Mammary epithelial cell (primary cell): ENCODE measurements at regions of chr10 and their contacts with region 1.

Region 1: DNA sequence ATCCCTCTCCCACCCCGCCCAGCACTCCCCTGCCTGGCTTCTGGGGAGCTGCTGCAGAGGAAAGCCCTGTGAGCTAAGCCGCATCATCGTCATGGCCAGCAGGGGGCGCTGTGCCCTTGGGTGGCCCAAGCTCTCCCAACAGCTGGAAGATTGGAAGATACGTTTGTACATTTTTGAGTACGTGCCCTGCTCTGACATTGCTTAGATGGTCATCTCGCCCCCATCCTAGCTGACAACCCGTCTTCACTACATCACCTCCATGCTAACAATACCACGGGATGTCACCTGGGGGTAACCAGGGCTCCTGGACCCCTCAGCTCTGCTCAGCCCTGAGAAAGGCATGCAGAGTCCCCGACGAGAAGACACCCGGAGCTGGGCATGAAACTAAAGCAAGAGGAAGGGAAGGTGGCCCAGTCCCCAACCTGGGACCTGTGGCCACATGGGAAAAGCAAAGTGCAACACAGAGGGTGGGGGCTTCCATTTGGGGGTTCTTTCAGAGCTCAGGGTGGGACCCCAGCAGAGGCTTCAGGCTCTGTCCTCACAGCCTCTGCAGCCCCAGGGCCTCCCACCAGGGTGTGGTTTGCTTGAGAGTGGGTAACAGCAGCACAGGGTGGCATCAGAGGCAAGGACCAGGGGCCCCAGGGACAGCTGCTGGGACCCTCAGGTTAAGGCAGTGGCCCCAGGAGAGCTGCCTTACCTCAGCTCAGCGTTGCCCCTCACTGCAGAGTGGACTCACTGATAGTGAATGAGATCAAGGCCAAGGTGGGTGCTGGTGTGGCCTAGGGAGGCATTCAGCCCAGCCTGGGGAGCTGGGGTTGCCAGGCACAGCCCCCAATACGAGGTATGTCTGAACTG is 136.7 kb downstream of the PTPN20 start:
- DNase-seq: peak; percentile 46
- H3K4me3 ChIP-seq: no peak overlapping the region
- H3K27ac ChIP-seq: no peak overlapping the region
- H3K4me1 ChIP-seq: no peaks in the 10 kb centered on the region
- H3K27me3 ChIP-seq: no peaks in the 10 kb centered on the region
- CTCF ChIP-seq: peak; percentile 82 to 92

Region 2: GRCh38 chr10:47104786-47105385 is 57.0 kb after region 1 on chr10:
- CTCF ChIA-PET with region 1: no interaction called
- dilution Hi-C with region 1: loop called (anchors 5 kb)
- in situ Hi-C with region 1: no loop called
- intact Hi-C with region 1: no loop called
- DNase-seq: no peak
- H3K4me3 ChIP-seq: no peak overlapping the region
- H3K27ac ChIP-seq: no peak overlapping the region
- H3K4me1 ChIP-seq: no peaks in the 10 kb centered on the region
- H3K27me3 ChIP-seq: peaks cover 6% of the 10 kb centered on the region
- CTCF ChIP-seq: no peak

Region 3: DNA sequence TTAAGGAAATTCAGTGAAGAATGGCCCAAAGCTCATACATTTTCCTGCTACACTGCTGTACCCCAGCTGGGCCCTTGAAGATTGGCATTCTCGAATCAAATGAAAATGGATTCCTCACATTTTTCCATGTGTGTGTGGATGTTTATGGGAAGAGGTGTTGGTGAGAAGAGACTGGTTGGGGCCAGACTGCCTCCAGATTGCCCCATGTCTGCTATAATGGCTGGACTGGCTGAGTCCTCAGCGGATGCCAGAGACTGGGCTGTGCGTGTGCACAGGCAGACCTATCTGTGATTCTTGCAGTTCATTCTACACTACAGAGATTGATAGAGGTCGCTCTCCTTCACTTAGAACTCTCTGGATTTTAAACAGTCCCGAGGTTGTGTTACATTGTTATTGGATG is 68.5 kb after region 1 on chr10:
- CTCF ChIA-PET with region 1: no interaction called
- dilution Hi-C with region 1: no loop called
- in situ Hi-C with region 1: no loop called
- intact Hi-C with region 1: no loop called
- DNase-seq: no peak
- H3K4me3 ChIP-seq: no peak overlapping the region
- H3K27ac ChIP-seq: no peak overlapping the region
- H3K4me1 ChIP-seq: no peaks in the 10 kb centered on the region
- H3K27me3 ChIP-seq: peaks cover 4% of the 10 kb centered on the region
- CTCF ChIP-seq: no peak

Region 4: DNA sequence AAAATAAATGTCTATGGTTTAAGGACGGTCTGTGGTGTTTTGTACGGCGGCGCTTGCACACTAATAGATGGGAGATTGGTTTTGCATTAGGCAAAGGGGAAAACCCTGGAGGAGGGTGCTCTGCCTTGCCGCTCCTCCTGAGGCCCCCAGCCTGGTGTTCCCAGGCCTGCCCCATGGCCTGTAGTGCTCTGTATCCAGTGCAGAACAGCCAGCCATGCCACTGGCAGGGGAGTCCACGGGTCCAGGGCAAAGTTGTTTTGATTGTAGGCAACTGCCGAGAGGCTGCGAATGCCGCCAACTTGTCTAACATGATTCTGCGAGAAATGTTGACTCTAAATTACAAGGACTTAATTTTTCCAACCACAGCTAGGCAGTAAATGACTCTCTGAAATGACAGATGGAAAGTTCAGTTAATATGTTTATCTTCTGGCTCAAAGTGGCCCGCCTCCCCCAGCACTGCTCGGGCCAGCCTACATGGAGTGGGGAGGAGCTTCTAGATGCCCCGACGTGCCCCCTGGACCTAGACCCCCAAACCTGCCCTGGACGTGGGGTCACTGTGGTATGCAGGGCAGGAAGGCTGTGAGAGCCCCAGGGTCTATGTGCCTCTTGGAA is 147.5 kb after region 1 on chr10:
- CTCF ChIA-PET with region 1: no interaction called
- dilution Hi-C with region 1: no loop called
- in situ Hi-C with region 1: no loop called
- intact Hi-C with region 1: loop called (anchors 10 kb)
- DNase-seq: no peak
- H3K4me3 ChIP-seq: no peak overlapping the region
- H3K27ac ChIP-seq: no peak overlapping the region
- H3K4me1 ChIP-seq: no peaks in the 10 kb centered on the region
- H3K27me3 ChIP-seq: no peaks in the 10 kb centered on the region
- CTCF ChIP-seq: no peak

Region 5: DNA sequence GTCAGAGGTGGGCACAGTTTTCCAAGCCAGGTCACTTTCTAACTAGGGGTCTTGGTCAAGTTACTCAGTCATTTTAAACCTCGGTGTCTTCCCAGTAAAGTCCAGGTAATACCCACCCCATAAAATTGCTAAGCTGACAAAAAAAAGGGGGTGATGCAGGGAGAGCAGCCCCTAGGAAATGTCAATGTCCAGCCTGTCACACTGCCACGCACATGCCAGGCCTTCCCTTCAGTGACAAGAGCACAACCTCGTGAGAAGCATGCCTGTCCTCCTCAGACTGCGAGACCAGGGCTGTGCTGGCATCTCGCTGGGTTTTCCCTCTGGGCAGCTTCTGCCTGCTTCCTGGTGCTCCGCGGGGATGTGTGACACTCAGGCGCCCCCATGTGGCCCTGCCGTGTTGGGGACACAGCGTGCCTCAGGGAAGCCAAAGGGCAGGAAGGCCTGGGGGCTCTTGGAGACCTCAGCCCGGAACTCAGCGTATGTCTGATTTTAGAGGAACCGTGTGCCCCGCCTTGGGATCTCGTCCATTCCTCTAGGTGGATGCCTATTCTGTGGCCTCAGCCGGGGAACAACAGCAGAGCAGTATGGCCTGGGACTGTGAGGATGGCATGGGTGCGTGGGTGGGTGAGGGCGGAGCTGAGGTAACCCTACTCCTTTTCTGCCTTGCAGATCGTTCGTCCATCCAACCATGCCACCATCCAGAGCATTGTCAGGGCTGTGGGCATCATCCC is 264.2 kb after region 1 on chr10:
- CTCF ChIA-PET with region 1: interaction called, 14 read pairs
- dilution Hi-C with region 1: no loop called
- in situ Hi-C with region 1: loop called (anchors 5 to 10 kb)
- intact Hi-C with region 1: loop called (anchors 1 kb)
- DNase-seq: peak; percentile 54
- H3K4me3 ChIP-seq: no peak overlapping the region
- H3K27ac ChIP-seq: no peak overlapping the region
- H3K4me1 ChIP-seq: no peaks in the 10 kb centered on the region
- H3K27me3 ChIP-seq: peaks cover 3% of the 10 kb centered on the region
- CTCF ChIP-seq: peak; percentile 76 to 96

Region 6: GRCh38 chr10:47340608-47341170 is 292.8 kb after region 1 on chr10:
- CTCF ChIA-PET with region 1: no interaction called
- dilution Hi-C with region 1: no loop called
- in situ Hi-C with region 1: no loop called
- intact Hi-C with region 1: loop called (anchors 1 kb)
- DNase-seq: peak; percentile 47
- H3K4me3 ChIP-seq: no peak overlapping the region
- H3K27ac ChIP-seq: no peak overlapping the region
- H3K4me1 ChIP-seq: no peaks in the 10 kb centered on the region
- H3K27me3 ChIP-seq: no peaks in the 10 kb centered on the region
- CTCF ChIP-seq: peak; percentile 90 to 99